ENCODE measurements at regions of chr7 and their contacts with region 1.

Region 1: GRCh38 chr7:77326696-77327628 is 89.2 kb downstream of the GSAP start:
- DNase-seq: peak; percentile 52
- ATAC-seq: peak; percentile 67

Region 2: DNA sequence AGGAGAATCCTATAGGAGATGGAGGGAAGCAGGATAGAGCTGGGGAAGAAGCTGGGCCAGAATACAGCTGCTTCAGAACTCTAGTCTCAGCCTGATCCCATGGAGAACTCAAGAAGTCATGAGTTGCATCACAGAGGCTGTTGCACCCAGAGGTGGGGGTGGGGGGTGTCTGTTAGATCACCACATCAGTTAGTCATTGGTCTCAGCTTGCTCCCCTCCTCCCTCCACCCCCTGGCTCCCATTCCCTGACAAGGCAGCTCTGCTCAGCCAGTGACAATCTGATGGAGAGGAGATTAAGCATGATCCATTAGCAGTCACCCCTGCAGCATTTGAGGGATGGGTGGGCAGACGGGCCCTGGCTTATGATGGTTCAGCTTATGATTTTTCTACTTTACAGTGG is 68.9 kb before region 1 on chr7:
- intact Hi-C with region 1: loop called (anchors 10 kb)
- DNase-seq: no peak
- ATAC-seq: peak; percentile 18

Region 3: GRCh38 chr7:77439572-77439971 is 112.6 kb after region 1 on chr7:
- intact Hi-C with region 1: no loop called
- DNase-seq: peak; percentile 53
- ATAC-seq: peak; percentile 86

Region 4: GRCh38 chr7:77455324-77455723 is 128.4 kb after region 1 on chr7:
- intact Hi-C with region 1: no loop called
- DNase-seq: peak; percentile 62
- ATAC-seq: peak; percentile 83

Region 5: DNA sequence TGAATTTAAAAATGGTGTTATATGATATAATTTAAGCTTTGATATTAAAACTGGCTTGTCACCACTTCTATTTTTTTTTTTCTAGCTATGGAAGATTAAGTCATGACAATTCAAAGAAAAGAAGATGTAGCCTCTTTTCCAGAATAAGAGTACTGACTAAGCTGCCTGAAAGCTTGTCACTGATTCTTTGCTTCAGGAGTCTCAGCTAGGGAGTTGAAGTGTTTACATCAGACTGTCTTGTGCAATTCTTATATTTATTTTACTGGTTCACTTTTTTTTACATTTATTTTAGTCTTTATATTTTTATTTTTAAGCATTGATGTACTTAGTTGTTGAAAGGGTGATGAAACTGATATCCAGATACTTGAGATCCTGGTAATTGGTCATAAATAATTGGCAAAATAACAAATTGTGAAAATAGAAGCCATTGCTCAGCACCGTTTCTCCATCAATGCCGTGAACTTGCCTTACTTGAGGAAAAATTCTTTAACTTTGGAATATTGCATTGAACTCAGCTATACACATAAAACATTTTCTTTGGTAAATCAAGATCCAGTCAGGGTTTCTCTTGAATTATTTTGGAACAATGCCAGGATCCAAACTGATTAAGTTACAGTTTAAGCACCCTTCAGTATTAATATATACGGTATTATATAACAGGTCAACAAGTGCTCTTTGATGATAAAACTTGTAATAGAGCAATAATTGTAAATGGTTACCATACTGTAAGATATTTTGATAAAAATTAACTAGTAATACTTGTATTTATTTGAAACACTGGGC is 628.0 kb after region 1 on chr7:
- intact Hi-C with region 1: no loop called
- DNase-seq: no peak
- ATAC-seq: no peak